ENCODE measurements at regions of chr13 and their contacts with region 1.

Region 1: DNA sequence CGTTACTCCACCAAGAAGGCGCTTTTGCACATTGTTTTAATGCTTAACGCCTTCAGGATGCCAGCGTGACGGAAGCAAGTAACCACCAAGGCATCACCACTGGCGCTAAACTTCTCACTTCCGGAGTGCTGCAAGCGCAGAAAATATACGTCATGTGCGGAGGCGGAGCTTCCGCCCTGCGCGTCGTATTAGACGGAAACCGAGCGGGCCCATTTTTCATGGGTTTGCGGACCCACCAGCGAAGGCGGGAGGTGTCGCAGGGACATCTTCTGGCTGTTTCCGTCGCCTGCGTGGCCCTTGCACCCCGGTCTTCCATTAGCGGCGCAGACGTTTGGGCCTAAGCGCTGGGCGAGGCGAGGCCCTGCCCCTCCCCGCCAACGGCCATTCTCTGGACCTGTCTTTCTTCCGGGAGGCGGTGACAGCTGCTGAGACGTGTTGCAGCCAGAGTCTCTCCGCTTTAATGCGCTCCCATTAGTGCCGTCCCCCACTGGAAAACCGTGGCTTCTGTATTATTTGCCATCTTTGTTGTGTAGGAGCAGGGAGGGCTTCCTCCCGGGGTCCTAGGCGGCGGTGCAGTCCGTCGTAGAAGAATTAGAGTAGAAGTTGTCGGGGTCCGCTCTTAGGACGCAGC is at the start of gene ERCC5:
- DNase-seq: peak; percentile 96
- H3K4me3 Mint-ChIP-seq: peak within 1 kb of the TSS; percentile 92
- H3K27ac Mint-ChIP-seq: peak within 1 kb of the TSS; percentile 96
- H3K4me1 Mint-ChIP-seq: peaks cover 35% of the 10 kb centered on the region
- H3K27me3 Mint-ChIP-seq: no peaks in the 10 kb centered on the region
- total RNA-seq, gene ERCC5: 52.0 to 54.0 TPM

Region 2: DNA sequence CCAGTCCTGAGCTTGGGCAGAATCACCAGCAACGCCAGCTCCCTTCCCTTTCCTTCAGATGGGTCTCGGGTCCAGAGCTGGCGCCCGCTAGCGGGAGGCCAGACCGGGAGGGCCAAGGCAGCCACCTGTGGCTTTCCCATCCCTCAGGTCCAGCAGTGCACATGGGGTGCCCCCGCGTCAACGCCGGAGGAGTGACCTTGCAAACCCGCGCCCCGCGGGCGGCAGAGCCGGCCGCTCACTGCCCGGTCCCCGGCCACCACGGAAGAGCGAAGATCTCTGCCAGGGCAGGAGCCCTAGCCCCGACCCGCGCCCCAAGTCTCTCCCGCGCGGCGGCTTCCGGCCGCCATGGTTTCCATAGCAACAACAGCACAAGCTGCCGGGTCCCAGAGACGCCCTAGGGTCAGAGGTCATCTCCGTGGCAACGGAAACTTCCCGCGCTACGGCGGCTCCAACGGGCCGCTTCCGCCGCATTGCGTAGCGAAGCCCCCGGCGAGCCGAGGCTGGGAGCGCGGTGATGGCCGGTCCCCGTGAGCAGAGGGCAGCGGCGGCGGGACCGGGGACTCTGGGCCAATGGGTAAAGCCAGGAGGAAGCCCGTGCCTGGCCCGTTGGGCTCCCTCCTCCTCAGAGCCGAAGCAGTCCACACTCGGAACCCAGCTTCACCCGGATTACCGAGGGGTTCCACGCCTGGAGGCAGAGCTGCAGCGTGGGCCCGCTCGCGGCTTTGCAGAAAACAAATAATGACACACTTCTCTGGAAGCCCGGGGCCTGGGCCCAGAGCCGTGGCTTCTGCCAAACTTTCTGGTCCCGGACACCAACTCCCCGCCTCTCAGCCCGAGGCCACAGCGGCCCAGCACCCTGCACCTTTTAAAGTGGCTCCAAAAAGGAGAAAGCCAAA is 451.3 kb before region 1 on chr13:
- CTCF ChIA-PET with region 1: no interaction called
- intact Hi-C with region 1: loop called (anchors 1 kb)
- DNase-seq: peak; percentile 97
- H3K4me3 Mint-ChIP-seq: peak overlapping the region; percentile 79
- H3K27ac Mint-ChIP-seq: peak overlapping the region; percentile 69
- H3K4me1 Mint-ChIP-seq: peaks cover 17% of the 10 kb centered on the region
- H3K27me3 Mint-ChIP-seq: peaks cover 16% of the 10 kb centered on the region

Region 3: DNA sequence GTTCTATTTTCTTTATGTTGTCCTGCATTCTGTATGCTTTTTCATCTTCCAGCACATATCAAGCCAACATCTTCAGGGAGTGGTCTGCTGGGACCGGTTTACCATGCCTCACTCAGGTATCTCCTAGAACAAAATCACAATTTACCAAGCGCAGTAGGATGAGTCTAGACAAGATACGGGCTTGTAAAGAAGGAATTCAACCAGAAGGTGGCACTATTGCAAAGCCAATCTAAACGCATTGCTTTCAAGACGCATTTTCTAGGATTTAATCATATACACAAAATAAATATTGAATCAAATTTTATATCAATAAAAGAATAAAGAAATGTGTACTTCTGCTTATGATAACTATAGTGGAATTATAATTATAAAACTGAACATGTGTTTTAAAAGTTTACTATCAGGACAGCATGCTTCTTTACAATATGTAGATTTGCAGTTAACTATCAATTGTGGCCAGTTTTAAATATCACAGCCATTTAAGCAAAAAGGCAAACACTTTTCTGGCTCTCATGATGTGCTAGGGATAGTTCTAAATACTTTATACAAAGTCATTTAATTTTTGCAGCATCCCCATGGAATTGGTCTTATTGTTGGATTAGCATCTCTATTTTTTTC is 265.1 kb before region 1 on chr13:
- CTCF ChIA-PET with region 1: interaction called, 5 read pairs
- intact Hi-C with region 1: loop called (anchors 1 kb)
- DNase-seq: peak; percentile 53
- H3K4me3 Mint-ChIP-seq: no peak overlapping the region
- H3K27ac Mint-ChIP-seq: no peak overlapping the region
- H3K4me1 Mint-ChIP-seq: peaks cover 5% of the 10 kb centered on the region
- H3K27me3 Mint-ChIP-seq: peaks cover 3% of the 10 kb centered on the region

Region 4: GRCh38 chr13:102680842-102681740 is 164.7 kb before region 1 on chr13:
- CTCF ChIA-PET with region 1: interaction called, 3 read pairs
- intact Hi-C with region 1: loop called (anchors 5 kb)
- DNase-seq: peak; percentile 12
- H3K4me3 Mint-ChIP-seq: no peak overlapping the region
- H3K27ac Mint-ChIP-seq: peak overlapping the region; percentile 47
- H3K4me1 Mint-ChIP-seq: peaks cover 25% of the 10 kb centered on the region
- H3K27me3 Mint-ChIP-seq: no peaks in the 10 kb centered on the region

Region 5: DNA sequence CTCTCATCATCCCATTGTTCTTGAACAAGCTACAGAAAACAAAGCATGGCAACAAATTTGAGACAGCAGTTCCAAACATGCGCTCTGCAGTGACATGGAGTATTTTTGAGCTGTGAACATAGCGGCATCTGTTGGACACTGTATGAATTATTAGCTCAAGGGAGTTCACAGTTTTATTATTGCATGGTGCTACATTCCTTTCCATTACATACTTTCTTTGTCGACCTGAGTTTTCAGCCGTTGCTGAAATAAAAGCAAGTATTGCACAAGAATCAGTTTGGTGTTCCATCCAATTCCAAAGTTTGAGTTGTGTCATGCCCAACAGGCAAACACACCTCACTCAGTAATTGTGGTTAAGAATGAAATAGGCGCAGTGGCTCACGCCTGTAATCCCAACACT is 120.8 kb before region 1 on chr13:
- CTCF ChIA-PET with region 1: no interaction called
- intact Hi-C with region 1: loop called (anchors 1 kb)
- DNase-seq: peak; percentile 9
- H3K4me3 Mint-ChIP-seq: no peak overlapping the region
- H3K27ac Mint-ChIP-seq: no peak overlapping the region
- H3K4me1 Mint-ChIP-seq: no peaks in the 10 kb centered on the region
- H3K27me3 Mint-ChIP-seq: peaks cover 4% of the 10 kb centered on the region

Region 6: GRCh38 chr13:102773441-102774215 is 72.1 kb before region 1 on chr13 and contains the start of gene TEX30:
- CTCF ChIA-PET with region 1: no interaction called
- intact Hi-C with region 1: loop called (anchors 1 kb)
- DNase-seq: peak; percentile 83
- H3K4me3 Mint-ChIP-seq: peak within 1 kb of the TSS; percentile 82
- H3K27ac Mint-ChIP-seq: peak within 1 kb of the TSS; percentile 87
- H3K4me1 Mint-ChIP-seq: peaks cover 34% of the 10 kb centered on the region
- H3K27me3 Mint-ChIP-seq: no peaks in the 10 kb centered on the region
- total RNA-seq, gene TEX30: 20.8 to 23.0 TPM

Region 7: GRCh38 chr13:102800145-102801041 is 45.4 kb before region 1 on chr13:
- CTCF ChIA-PET with region 1: interaction called, 8 read pairs
- intact Hi-C with region 1: loop called (anchors 1 kb)
- DNase-seq: peak; percentile 83
- H3K4me3 Mint-ChIP-seq: peak overlapping the region; percentile 93
- H3K27ac Mint-ChIP-seq: no peak overlapping the region
- H3K4me1 Mint-ChIP-seq: peaks cover 13% of the 10 kb centered on the region
- H3K27me3 Mint-ChIP-seq: peaks cover 21% of the 10 kb centered on the region

Measured in activated naive CD4-positive, alpha-beta T cell treated with anti-CD3 and anti-CD28 coated beads for 36 hours (primary cell).